ENCODE measurements at regions of chr3 and their contacts with region 1.

Region 1: GRCh38 chr3:122679085-122679881 is 1.4 kb upstream of the PARP14 start:
- DNase-seq: no peak
- H3K4me3 ChIP-seq: no peak overlapping the region
- H3K27me3 ChIP-seq: no peaks in the 10 kb centered on the region
- CTCF ChIP-seq: peak; percentile 86

Region 2: GRCh38 chr3:122392868-122393844 is 286.1 kb before region 1 on chr3:
- CTCF ChIA-PET with region 1: interaction called, 21 read pairs
- POLR2A ChIA-PET with region 1: no interaction called
- DNase-seq: no peak
- H3K4me3 ChIP-seq: no peak overlapping the region
- H3K27me3 ChIP-seq: no peaks in the 10 kb centered on the region
- CTCF ChIP-seq: peak; percentile 73

Region 3: DNA sequence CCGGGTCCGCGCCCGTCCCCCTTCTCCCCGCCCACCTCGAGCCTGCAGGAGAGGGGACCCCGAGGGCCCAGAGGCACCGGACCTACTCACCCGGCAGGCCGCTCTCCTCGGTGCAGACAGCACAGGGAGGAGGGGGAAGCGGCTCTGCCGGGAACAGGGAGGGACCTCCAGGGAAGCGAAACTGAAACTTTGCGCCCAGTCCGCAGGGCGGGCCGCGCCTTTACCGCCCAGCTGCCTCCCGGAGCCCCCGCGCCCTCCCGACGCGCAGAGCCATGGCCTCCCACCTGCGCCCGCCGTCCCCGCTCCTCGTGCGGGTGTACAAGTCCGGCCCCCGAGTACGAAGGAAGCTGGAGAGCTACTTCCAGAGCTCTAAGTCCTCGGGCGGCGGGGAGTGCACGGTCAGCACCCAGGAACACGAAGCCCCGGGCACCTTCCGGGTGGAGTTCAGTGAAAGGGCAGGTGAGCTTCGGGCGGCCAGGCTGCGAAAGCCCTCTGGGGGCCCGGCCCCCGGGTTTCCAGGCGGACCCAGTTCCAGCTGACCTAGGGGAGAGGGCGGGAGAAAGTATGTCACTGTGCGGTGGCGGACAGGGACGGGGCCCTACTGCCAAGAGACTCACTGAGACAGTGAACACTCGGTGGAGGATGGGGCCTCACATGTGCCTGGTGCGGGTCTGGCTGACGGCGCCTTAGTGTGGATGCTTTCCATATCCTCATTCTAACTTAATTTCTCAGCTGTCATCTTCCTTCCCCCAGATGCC is 114.9 kb before region 1 on chr3 and contains the starts of genes DTX3L and PARP9:
- CTCF ChIA-PET with region 1: interaction called, 78 read pairs
- POLR2A ChIA-PET with region 1: no interaction called
- DNase-seq: no peak
- H3K4me3 ChIP-seq: peak within 1 kb of the TSS; percentile 85
- H3K27me3 ChIP-seq: no peaks in the 10 kb centered on the region
- CTCF ChIP-seq: no peak
- polyA plus RNA-seq, gene DTX3L: 3.5 and 6.1 TPM in 2 replicates
- polyA plus RNA-seq, gene PARP9: 18.2 and 26.9 TPM in 2 replicates

Region 4: GRCh38 chr3:122668930-122669730 is 10.2 kb before region 1 on chr3:
- CTCF ChIA-PET with region 1: interaction called, 13 read pairs
- POLR2A ChIA-PET with region 1: no interaction called
- DNase-seq: no peak
- H3K4me3 ChIP-seq: no peak overlapping the region
- H3K27me3 ChIP-seq: no peaks in the 10 kb centered on the region; the same call in 1 of the 2 replicates
- CTCF ChIP-seq: no peak

Region 5: GRCh38 chr3:123028233-123028828 is 349.0 kb after region 1 on chr3:
- CTCF ChIA-PET with region 1: interaction called, 11 read pairs
- POLR2A ChIA-PET with region 1: no interaction called
- DNase-seq: no peak
- H3K4me3 ChIP-seq: peak overlapping the region; percentile 34
- H3K27me3 ChIP-seq: peaks cover 69% of the 10 kb centered on the region
- CTCF ChIP-seq: peak; percentile 61